HCT116 (cell line): ENCODE measurements at regions of chr2 and their contacts with region 1.

Region 1: GRCh38 chr2:175326801-175327200 is 145.3 kb upstream of the ATP5MC3 start:
- DNase-seq: no peak
- ATAC-seq: no peak
- H3K4me3 ChIP-seq: no peak overlapping the region
- H3K27ac ChIP-seq: no peak overlapping the region
- H3K4me1 ChIP-seq: no peaks in the 10 kb centered on the region
- H3K27me3 ChIP-seq: no peaks in the 10 kb centered on the region
- CTCF ChIP-seq: no peak
- POLR2A ChIP-seq: no peak
- RAD21 ChIP-seq: no peak

Region 2: DNA sequence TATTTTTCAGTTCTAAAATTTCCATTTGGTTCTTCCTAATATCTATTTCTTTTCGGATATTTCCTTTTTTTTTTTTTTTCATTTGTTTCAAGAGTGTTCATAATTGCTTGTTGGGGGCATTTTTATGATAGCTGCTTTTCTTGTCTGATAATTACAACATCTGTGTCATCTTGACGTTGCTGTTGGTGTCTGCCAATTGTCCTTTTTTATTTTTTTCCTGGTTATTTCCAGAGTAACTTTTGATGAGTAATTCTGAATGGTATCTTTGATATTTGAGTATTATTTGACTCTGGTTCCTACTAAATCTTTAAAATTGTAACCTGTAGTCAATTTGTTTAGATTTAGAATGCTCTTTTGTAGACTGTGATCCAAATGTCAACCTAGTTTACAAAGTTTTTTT is 511.3 kb before region 1 on chr2:
- CTCF ChIA-PET with region 1: no interaction called
- POLR2A ChIA-PET with region 1: no interaction called
- RAD21 ChIA-PET with region 1: no interaction called
- intact Hi-C with region 1: no loop called
- DNase-seq: no peak
- ATAC-seq: no peak
- H3K4me3 ChIP-seq: no peak overlapping the region
- H3K27ac ChIP-seq: no peak overlapping the region
- H3K4me1 ChIP-seq: no peaks in the 10 kb centered on the region
- H3K27me3 ChIP-seq: no peaks in the 10 kb centered on the region
- CTCF ChIP-seq: no peak
- POLR2A ChIP-seq: no peak
- RAD21 ChIP-seq: no peak

Region 3: DNA sequence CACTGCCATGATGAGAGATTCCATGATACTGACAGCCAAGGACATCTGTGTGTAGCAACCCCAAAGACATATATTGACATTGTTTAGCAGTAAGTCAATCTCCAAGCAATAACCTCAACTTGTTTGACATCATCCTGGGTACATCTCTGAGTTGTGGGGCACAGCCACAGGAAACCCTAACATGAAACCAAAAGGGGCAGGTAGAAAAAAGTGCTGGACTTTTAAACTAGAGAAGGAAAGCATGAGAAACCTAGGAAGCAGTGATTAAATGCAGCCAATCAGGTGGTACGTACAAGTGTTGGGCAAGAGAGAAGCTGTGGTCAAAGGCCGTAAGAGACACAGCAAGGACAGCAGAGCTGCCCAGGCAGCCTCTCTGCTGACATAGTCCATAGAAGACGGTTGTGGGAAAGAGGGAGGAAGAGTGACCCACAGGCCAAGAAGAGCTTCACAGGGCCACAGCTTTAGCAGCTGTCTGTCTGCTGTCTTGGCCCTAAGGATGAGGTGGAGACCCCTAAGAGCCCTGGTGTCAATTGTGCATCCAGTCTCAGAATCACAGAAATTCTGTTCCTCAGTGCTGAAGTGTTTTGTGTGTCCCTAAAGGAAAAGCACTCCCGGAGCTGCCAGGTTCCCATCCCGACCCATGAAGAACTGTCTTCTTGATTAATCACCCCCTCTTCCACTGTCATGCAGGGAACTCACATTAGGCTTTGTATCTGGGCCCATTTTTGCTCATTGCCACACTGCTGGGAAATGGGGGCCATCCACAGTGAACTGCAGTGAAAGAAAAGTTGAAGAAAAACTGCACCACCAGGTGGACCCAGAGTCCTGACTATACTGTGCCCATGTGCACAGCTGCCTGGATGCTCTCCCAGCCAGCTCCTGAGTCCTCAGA is 296.2 kb before region 1 on chr2:
- CTCF ChIA-PET with region 1: interaction called, 19 read pairs
- POLR2A ChIA-PET with region 1: no interaction called
- RAD21 ChIA-PET with region 1: interaction called in 1 of 2 experiments, 3 read pairs
- intact Hi-C with region 1: loop called (anchors 1 kb)
- DNase-seq: peak; percentile 16
- ATAC-seq: peak; percentile 99
- H3K4me3 ChIP-seq: no peak overlapping the region
- H3K27ac ChIP-seq: no peak overlapping the region
- H3K4me1 ChIP-seq: no peaks in the 10 kb centered on the region
- H3K27me3 ChIP-seq: no peaks in the 10 kb centered on the region
- CTCF ChIP-seq: peak; percentile 44 to 58 (median 47); a peak in 4 of 6 replicates
- POLR2A ChIP-seq: no peak
- RAD21 ChIP-seq: peak; percentile 72

Region 4: DNA sequence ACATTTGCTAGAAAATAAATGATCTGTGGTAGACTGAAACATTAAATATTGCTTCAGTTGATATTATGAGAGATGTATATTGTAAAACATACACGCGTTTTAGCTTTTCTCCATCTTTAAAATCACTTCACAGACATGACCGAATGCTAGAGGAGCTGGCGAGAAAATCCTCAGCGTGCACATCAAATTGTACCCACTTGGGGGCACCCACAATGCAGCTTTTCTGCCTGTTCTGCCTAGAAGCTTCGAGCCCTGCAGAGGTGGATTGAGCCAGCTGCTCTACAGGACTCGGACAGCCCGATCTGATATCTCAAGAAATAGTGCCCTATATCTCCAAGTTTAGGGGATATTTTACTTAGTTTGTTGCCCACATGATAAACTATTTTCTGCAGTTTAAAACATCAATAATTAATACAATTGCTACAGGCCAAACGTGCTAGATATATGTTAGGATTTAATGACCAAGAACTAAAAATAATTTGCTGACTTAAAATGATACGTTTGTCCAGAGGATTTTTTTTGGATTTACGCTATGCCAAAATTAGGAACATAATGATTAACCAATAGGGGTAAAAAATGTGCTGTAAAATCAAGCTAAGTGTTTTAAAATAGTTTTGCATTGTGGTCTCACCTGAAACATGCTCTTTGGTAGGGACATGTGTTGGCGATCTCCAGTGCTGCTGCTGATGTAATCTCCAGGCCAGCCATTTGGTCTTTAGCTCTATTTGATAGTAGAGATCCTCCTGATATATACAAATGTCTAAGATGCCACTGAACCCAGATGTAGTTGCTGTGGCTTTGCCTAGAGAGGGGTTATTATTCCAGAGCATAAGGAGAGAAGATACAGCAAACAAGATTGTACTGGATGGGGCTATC is 122.9 kb before region 1 on chr2:
- CTCF ChIA-PET with region 1: interaction called, 15 read pairs
- POLR2A ChIA-PET with region 1: no interaction called
- RAD21 ChIA-PET with region 1: interaction called, 3 to 5 read pairs
- intact Hi-C with region 1: loop called (anchors 1 kb)
- DNase-seq: peak; percentile 57
- ATAC-seq: peak; percentile 100
- H3K4me3 ChIP-seq: peak overlapping the region in 1 of 2 experiments; percentile 27; a peak in 2 of 4 replicates
- H3K27ac ChIP-seq: no peak overlapping the region
- H3K4me1 ChIP-seq: peaks cover 0 to 9% of the 10 kb centered on the region in 2 experiments; a peak in 1 of 4 replicates
- H3K27me3 ChIP-seq: no peaks in the 10 kb centered on the region
- CTCF ChIP-seq: peak; percentile 53 to 74 (median 71)
- POLR2A ChIP-seq: no peak
- RAD21 ChIP-seq: peak; percentile 65

Region 5: DNA sequence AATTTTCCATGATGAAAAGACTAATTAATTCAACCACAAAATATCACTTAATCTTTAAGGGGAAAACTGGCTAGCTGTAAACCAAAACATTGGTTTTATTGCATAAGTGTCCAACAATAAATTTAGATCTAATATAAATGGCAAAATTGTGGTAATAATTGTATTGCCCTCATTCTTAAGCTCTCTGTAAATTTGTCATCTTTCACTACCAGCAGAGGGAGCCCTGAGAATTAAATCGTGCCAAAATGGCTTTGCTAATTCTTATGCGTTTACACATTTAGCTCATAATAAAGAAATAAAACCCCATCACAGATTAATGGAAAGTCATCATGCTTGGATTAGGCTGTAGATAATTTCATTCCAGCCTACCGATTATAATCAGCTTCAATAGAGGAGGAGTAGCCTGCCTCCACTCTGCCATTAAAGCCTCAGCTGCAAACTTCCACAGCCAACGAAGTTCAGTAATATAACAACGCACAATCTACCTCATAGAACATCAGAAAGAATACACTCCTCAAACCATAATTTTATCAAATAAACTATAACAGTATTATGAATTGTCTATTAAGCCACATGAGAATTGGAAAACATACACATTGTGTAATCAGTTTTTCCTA is 75.3 kb before region 1 on chr2:
- CTCF ChIA-PET with region 1: interaction called, 14 read pairs
- POLR2A ChIA-PET with region 1: no interaction called
- RAD21 ChIA-PET with region 1: no interaction called
- intact Hi-C with region 1: no loop called
- DNase-seq: peak; percentile 24
- ATAC-seq: peak; percentile 75
- H3K4me3 ChIP-seq: no peak overlapping the region
- H3K27ac ChIP-seq: no peak overlapping the region
- H3K4me1 ChIP-seq: no peaks in the 10 kb centered on the region
- H3K27me3 ChIP-seq: no peaks in the 10 kb centered on the region
- CTCF ChIP-seq: peak; percentile 53 to 78 (median 65); a peak in 5 of 6 replicates
- POLR2A ChIP-seq: no peak
- RAD21 ChIP-seq: peak; percentile 51